Mucosa of descending colon (tissue), 3 donors: ENCODE measurements at regions of chr12 and their contacts with region 1.

Region 1: DNA sequence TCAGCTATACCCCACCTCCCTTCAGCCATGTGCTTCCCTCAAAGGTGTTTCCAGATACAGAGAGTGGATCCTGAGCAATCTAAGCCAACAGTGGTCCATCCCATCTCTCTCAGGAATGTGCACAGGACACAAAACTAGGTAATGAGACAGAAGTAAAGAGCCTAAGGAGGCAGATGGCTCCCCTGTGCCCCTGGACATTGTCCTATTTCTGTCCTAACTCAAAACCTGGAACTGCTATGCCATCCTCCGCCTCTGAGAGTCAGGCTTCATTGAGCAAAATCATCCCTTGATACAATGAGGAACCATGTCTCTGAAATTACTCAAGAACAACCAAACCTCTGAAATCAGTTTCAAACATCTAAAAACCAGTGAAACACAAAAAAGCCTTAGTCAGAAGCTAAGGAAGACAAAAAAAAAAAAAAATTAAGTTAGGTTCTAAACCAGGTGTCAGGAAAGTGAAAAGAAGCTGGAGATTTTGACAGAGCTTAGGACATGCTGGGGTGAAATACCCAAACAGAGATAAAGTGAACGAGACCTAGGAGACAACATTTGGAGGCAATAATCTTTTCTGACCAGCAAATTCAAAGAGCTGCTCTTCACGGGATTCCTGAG is 200.3 kb upstream of the PLEKHG7 start:
- DNase-seq: peak in 1 of 3 donors; percentile 21
- ATAC-seq: peak; percentile 19
- H3K4me3 ChIP-seq: no peak overlapping the region
- H3K4me1 ChIP-seq: peaks cover 25% of the 10 kb centered on the region
- CTCF ChIP-seq: no peak

Region 2: DNA sequence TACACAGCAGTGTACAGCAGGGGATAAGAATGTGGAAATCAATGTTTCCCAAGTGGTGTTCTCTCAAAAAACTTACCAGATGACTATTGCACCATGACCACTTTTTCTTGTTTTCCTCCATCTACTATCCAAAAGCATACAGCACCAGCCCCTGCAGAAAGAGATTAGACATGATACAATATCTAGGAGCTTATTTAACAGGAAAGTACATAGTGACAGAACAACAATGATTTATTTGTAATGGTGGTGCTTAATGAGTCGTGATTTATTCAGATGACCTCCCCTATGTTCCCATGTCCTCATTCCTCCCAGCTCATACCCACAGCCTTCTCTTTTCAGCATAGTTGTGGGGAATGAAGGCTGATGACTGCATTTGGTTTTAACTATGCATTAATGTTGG is 770.4 kb before region 1 on chr12:
- intact Hi-C with region 1: no loop called
- DNase-seq: no peak
- ATAC-seq: no peak
- H3K4me3 ChIP-seq: no peak overlapping the region
- H3K4me1 ChIP-seq: no peaks in the 10 kb centered on the region
- CTCF ChIP-seq: no peak

Region 3: GRCh38 chr12:92551853-92552397 is 49.4 kb after region 1 on chr12:
- intact Hi-C with region 1: loop called in 1 of 2 experiments (anchors 5 kb)
- DNase-seq: no peak
- ATAC-seq: peak; percentile 31
- H3K4me3 ChIP-seq: no peak overlapping the region
- H3K4me1 ChIP-seq: peaks cover 9% of the 10 kb centered on the region
- CTCF ChIP-seq: no peak

Region 4: GRCh38 chr12:92690601-92691000 is 188.1 kb after region 1 on chr12:
- intact Hi-C with region 1: no loop called
- DNase-seq: no peak
- ATAC-seq: no peak
- H3K4me3 ChIP-seq: no peak overlapping the region
- H3K4me1 ChIP-seq: no peaks in the 10 kb centered on the region
- CTCF ChIP-seq: no peak